HEK293T (cell line): ENCODE measurements at regions of chr5 and their contacts with region 1.

Region 1: DNA sequence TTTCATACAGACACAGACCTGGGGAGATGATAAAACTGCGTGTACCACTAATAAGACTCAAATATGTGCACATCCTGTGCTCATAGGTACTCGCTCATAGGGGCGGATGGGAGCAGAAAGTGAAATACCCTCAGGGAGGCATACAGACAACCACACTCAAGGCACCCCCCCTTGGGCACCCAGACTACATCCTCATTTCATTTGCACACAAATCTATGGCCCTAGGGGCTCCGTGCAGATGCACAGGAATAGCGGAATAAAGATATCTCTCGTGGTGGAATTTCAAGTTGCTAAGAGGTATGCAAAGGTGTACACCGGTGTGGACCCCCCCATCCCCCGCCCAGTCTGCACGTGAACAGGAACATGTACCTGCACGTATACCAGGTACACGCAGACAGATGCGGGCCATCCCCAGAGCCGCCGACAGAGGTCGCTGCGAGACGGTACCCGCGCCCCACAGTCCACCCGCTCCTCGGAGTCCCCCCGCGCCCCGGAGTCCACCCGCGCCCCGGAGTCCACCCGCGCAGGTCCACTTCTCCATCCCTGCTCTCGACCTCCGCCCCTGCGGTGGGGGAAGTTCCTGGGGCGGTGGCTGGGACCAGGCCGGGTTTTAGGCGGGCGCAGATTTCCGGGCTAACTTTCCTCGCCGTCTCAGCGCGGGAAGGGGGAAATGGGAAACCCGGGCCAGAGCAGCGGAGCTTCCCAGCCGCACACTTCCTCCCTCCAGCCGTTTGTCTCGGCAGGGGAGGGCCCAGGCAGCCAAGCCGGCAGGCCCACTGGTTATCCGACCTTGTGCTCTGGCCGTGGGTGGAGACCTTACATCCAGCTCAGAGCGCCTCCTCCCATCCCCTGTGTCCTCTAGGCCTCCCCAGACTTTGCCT is 1.0 kb upstream of the IL12B start:
- DNase-seq: peak; percentile 80

Region 2: DNA sequence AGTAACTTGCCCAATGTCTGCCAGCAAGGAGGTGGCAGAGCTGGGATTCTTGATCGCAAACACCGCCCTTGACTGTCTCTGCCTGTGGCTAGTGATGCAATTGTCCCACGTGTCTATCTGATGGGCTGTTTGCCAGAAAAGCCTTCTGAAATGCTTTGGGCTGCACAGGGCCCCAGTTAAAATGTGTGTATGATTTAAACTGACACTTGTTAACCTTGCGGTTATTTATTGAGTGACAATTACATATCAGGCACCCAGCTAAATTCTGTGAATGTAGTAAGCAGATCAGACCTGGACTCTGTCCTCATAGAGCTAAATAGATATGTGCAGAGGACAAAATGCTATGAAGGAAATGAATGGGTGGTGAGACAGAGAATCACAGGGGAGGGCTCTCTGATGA is 10.6 kb after region 1 on chr5:
- CTCF ChIA-PET with region 1: interaction called, 12 read pairs
- POLR2A ChIA-PET with region 1: interaction called, 4 read pairs
- DNase-seq: peak; percentile 62

Region 3: DNA sequence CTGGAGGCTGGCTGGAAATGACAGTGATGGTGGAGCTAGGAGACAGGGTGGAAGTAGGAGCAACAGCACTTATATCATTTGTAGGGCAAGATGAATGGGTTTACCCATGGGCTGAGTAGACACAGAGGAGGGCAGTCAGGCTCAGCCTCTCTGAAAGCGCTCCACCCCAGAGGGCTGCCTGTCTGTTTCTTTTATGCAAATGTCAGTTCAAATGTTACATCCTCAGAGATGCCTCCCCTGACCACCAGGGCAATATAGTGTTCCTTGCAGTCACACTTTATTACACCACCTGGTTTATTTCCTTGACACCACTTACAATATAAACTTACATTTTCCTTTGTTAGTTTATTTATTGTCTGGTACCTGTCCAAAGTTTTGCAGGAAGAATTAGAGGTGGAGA is 158.4 kb after region 1 on chr5:
- CTCF ChIA-PET with region 1: interaction called, 10 read pairs
- POLR2A ChIA-PET with region 1: no interaction called
- DNase-seq: no peak